Activated T-helper 2 cell treated with anti-CD3 and anti-CD28 coated beads, Interferon-gamma antibody, Interleukin-2, Interleukin-4, amounts not matched to agents 10 μg/mL and 5 μg/mL and 100 μg/mL, durations not matched to agents 14 hours and 24 hours and 36 hours (primary cell): ENCODE measurements at regions of chr9 and their contacts with region 1.

Region 1: DNA sequence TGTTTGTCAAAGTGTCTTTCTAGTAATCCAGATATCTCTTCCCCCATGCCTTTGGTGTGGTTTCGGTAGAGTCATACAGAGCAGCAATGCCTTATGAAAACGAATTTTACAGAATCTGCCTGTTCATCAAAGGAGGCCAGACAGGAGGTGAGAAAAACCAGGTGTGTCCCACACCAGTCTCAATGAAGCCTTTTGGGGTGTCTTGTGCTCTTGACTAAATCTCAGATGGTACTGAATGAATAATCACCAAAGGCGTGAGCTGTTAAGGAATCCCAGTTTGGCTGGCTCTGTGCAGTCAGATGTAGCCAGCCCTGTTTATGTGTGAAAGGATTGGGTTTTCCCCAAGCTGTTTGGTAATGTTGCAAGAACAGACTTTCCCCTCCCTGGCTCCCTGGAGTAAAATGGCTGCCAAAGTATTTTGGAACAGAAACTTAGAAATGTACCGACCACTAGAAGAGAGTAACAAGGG is 70.8 kb upstream of the CDKN2B start:
- DNase-seq: peak; percentile 58
- H3K4me3 Mint-ChIP-seq: peak overlapping the region; percentile 34
- H3K27ac Mint-ChIP-seq: peak overlapping the region; percentile 46
- H3K4me1 Mint-ChIP-seq: peaks cover 52% of the 10 kb centered on the region
- H3K27me3 Mint-ChIP-seq: peaks cover 36% of the 10 kb centered on the region

Region 2: DNA sequence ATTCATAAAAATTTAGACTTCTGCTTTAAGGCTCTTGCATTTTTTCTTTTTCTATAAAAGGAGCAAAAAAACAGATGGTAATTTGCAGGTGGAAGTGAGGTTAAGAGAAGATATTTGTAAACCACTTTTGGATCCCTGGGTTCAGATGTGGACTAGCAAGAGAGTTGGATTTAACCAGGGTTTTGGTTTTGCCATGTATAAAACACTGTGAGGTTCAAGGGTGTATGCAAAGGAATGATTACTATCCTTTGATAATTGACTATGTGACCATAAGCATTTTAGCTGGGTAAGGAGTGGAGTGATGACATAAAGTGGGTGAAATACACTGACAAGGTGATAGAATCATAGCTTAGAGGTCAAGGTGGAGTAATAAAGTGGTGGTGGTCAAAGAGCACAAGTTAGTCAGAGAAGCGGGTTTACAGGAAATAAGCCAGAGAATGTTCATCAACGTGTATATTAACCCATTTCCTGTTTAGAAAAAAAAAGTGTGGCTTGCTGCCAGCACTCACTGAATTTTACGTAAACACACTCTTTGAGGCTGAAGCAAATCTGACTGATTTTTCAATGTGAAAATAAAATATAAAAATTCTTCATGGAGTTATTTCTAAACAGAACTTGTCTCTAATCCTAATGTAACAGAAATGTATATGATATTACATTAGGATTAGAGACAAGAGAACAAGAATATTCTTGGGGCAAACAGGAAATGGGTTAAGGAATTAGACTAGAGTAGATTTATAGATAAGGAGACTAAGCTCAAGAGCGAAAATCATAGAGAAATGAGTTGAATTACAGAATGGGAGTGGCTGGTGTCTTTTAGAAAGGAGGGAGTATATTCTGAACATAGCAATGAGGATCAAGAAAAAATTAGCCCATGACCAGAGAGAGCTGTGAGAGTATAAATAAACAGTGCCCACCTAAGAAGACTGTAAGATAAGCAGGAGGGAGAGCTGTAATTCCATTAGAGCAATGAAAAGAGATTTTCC is 160.2 kb before region 1 on chr9:
- intact Hi-C with region 1: loop called (anchors 1 kb)
- DNase-seq: peak; percentile 14
- H3K4me3 Mint-ChIP-seq: peak overlapping the region; percentile 47
- H3K27ac Mint-ChIP-seq: peak overlapping the region; percentile 68
- H3K4me1 Mint-ChIP-seq: peaks cover 33% of the 10 kb centered on the region
- H3K27me3 Mint-ChIP-seq: no peaks in the 10 kb centered on the region

Region 3: DNA sequence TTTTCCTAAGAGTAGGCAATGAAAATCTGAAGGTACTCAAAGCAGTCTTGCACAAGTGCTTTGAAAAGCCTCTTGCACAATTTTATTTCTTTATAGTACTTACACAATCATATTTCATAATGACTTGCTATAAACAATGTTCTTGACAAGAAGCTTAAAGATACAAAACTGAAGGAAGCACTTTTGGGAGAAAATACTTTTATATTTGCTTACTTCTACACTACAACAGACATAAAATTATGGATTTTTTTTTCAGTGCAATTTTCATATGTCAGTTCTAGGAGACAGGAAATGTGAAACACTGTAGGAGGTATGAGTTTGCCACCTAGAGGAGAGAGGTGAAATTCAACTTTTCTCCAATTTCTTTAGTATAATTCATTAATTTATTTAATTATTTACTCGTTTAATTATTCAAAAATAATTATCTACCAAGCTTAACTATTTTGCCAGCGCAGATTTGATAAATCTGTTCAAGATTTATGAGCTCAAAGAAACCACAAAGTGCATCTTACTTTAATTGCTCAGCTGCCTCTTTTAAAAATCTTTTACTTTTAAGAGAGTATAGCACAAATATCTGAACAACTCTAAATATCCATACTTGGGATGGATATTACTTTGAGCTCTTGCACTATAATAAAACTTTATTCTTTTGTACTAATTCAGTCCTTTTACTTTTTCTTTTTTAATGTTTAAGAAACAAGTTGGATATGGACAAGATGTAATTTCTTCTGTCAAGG is 41.8 kb before region 1 on chr9:
- intact Hi-C with region 1: loop called (anchors 1 kb)
- DNase-seq: no peak
- H3K4me3 Mint-ChIP-seq: no peak overlapping the region
- H3K27ac Mint-ChIP-seq: no peak overlapping the region
- H3K4me1 Mint-ChIP-seq: peaks cover 46% of the 10 kb centered on the region
- H3K27me3 Mint-ChIP-seq: peaks cover 26% of the 10 kb centered on the region

Region 4: DNA sequence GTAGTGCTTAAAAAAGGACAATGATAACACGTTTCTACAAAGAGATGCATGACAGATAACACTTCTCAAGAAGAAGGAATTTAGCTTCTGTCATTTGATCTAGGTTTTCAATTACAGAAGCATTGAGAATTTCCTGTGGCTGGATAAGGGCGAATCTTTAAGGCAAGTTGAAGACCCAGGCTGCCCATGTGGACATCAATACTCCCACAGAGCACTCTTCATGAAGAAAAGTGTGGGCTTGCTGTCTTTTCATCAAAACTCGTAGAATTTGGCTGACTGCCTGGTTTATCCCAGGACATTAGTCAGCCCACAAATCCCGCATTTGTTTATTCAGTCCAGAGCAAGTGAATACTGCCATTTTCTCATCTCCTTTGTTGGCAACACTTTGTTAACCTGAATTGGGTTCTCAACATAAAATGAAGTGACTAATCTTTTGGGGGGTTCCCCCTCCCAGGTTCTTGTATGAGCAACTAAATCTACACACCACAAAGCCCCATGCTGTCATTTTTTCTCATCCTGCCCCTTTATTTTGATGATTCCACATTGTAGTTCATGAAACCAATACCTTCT is 27.4 kb before region 1 on chr9:
- intact Hi-C with region 1: loop called (anchors 1 kb)
- DNase-seq: no peak
- H3K4me3 Mint-ChIP-seq: no peak overlapping the region
- H3K27ac Mint-ChIP-seq: peak overlapping the region; percentile 20
- H3K4me1 Mint-ChIP-seq: peaks cover 39% of the 10 kb centered on the region
- H3K27me3 Mint-ChIP-seq: peaks cover 22% of the 10 kb centered on the region

Region 5: DNA sequence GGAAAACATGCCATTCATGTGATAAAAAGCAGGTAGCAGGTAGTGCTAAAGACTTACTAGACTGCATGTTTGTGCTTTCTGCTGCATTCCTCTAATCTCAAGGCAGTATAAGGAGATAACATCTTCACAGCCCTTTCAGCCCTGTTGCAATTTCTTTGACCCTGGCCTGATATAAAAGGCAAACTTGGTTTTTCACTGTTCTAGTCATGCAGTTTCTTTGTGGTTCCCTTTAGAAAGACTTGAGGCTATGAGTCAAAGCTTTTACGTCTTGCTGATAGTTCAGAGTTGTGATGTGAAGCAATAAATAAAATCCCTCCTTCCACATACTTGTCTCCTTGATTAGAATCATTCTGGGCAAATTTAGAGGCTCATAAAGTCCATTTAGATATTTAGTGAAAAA is 17.8 kb after region 1 on chr9:
- intact Hi-C with region 1: loop called (anchors 1 kb)
- DNase-seq: no peak
- H3K4me3 Mint-ChIP-seq: no peak overlapping the region
- H3K27ac Mint-ChIP-seq: peak overlapping the region; percentile 44
- H3K4me1 Mint-ChIP-seq: peaks cover 42% of the 10 kb centered on the region
- H3K27me3 Mint-ChIP-seq: peaks cover 42% of the 10 kb centered on the region

Region 6: DNA sequence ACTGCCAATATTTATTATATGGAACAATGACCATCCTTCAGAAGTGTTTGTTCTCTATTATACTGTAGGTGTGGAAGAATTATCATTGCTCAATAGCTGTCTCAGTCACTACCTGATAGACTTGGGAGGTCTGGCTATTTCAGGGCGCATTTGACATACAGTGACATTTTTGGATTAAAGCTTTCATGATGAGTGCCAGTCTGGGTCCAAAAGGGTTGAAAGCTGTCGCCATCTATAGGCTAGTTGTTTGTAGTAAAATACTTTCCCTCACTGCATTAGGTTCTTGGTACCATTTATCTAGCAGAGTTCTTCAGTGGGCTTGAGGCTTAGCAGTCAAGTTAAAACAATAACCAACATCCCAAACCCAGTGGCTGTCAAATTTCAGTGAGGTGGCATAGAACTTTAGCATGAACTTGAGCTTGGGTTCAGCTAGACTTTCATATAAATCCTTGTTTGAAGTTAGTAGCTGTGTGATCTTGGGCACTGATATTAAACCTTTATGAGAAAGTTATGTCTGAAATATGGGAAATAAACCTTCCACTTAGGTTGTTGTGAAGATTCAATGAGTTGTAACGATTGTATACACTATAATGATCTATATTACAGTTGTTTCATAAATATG is 39.7 kb after region 1 on chr9:
- intact Hi-C with region 1: loop called (anchors 1 kb)
- DNase-seq: no peak
- H3K4me3 Mint-ChIP-seq: no peak overlapping the region
- H3K27ac Mint-ChIP-seq: no peak overlapping the region
- H3K4me1 Mint-ChIP-seq: peaks cover 16% of the 10 kb centered on the region
- H3K27me3 Mint-ChIP-seq: peaks cover 68% of the 10 kb centered on the region

Region 7: DNA sequence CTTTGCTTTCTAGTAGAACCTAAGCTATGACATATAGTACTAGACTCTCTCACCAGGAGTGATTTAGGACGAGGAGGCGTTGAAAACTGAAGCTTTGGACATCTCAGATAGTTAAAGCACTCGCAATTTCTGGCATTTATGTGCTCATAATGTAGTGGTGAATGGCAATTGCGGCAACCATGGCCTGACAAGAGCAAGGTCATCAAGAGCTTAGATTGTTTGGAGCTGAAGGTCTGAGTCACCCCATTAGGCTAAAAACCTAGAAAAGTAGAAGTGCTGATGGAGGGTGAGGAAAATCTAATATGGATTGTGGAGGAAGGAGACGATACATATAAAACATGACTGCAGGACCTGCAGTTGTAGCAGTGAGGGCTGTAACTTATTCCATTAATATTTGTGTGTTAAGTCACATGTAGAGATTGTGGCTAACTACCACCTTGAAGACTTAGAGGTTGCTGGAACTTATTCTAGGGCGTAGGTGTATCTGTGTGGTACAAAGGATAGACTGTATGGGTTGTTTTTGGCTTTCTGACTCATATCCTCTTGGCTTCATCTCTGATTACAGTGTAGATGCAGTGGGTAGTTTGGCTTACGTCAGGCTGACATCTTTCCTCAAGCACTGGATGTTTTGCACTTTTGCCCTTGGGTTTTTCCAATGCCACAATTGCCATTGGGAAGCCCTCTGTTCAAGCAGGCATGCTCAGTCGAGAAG is 68.1 kb after region 1 on chr9:
- intact Hi-C with region 1: loop called (anchors 1 kb)
- DNase-seq: peak; percentile 14
- H3K4me3 Mint-ChIP-seq: no peak overlapping the region
- H3K27ac Mint-ChIP-seq: peak overlapping the region; percentile 4
- H3K4me1 Mint-ChIP-seq: peaks cover 36% of the 10 kb centered on the region
- H3K27me3 Mint-ChIP-seq: peaks cover 26% of the 10 kb centered on the region